AG04449 (cell line): ENCODE measurements at regions of chr13 and their contacts with region 1.

Region 1: DNA sequence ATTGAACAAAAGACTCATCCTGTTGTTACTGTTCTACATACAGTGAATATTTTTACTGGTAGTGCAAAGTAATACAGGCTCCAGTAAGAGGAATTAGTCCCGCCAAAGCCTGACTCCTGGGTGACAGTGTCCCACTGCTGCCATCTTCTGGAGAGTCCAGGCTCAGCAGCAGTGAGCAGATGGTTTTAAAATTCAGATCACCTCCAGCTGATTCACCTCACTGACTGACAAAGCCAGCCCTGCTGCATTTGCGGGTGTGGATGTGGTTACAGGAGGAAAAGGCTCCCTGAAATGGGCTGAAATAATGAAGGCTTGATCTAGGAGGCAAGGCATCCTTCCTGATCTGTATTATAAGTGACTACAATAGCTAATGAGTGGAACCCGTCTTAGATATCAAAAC is 18.3 kb downstream of the PABPC3 start:
- DNase-seq: peak; percentile 16
- H3K4me3 ChIP-seq: no peak overlapping the region
- CTCF ChIP-seq: peak; percentile 87

Region 2: DNA sequence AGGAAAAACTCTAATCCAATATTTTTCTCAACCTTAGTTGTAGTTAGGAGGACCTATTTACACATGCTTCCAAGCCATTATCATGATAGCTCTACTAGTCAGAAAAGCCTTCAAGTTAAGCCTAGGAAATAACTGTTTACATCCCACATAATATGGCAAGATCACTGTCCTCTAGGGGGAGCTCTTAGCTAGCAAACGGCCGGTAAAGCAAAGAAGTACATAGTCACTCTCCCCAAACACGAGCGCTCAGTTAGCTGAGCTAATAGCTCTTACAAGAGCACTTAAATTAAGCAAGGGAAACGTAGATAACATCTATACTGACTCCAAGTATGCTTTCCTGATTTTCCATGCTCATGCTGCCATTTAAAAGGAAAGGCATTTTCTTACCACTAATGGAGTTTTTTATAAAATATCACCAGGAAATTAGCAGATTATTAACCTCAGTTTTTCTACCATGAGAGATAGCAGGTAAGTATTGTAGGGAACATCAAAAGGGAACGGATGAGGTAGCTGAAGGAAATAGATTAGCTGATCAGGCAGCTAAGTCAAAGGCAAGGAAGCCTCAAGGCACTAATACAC is 118.9 kb before region 1 on chr13:
- CTCF ChIA-PET with region 1: interaction called, 19 read pairs
- POLR2A ChIA-PET with region 1: no interaction called
- DNase-seq: peak; percentile 45
- H3K4me3 ChIP-seq: no peak overlapping the region
- CTCF ChIP-seq: peak; percentile 78

Region 3: DNA sequence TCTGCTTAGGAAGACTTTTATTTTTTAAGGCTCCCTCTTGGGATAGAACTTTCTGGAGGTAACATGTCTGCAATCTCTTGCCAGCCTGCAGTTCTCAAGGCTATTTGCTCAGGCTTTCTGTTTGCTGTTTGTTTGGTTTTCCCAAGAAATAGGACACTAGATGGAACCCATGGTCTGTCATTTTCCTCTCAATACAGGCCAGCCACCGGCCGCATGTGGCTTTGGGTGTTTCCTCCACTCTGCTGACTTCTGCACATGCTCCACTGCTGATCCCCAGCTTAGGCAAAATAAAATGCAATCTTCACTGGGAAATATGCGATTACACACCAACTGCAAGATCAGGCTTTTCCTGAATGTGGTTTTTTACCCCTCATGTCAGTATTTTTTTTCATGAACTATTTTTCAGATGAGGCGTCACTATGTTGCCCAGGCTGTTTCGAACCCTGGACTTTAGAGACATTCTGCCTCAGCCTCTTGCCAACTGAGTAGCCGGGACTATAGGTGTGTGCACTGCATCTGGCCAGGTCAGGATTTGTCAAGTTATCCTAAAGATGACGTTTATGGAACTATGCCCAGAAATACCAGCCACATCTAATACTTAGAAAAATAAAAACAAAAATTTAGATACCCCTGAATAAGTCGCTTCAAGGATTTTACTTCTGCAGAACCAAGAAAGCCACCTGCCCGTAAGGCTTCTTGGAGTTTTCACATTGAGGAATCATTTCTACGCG is 112.6 kb before region 1 on chr13:
- CTCF ChIA-PET with region 1: interaction called, 23 read pairs
- POLR2A ChIA-PET with region 1: no interaction called
- DNase-seq: no peak
- H3K4me3 ChIP-seq: no peak overlapping the region
- CTCF ChIP-seq: no peak

Region 4: GRCh38 chr13:25069911-25070310 is 44.3 kb before region 1 on chr13:
- CTCF ChIA-PET with region 1: no interaction called
- POLR2A ChIA-PET with region 1: no interaction called
- DNase-seq: no peak
- H3K4me3 ChIP-seq: no peak overlapping the region
- CTCF ChIP-seq: no peak

Region 5: GRCh38 chr13:25085125-25085742 is 29.0 kb before region 1 on chr13:
- CTCF ChIA-PET with region 1: interaction called, 40 read pairs
- POLR2A ChIA-PET with region 1: no interaction called
- DNase-seq: no peak
- H3K4me3 ChIP-seq: no peak overlapping the region
- CTCF ChIP-seq: peak; percentile 53

Region 6: DNA sequence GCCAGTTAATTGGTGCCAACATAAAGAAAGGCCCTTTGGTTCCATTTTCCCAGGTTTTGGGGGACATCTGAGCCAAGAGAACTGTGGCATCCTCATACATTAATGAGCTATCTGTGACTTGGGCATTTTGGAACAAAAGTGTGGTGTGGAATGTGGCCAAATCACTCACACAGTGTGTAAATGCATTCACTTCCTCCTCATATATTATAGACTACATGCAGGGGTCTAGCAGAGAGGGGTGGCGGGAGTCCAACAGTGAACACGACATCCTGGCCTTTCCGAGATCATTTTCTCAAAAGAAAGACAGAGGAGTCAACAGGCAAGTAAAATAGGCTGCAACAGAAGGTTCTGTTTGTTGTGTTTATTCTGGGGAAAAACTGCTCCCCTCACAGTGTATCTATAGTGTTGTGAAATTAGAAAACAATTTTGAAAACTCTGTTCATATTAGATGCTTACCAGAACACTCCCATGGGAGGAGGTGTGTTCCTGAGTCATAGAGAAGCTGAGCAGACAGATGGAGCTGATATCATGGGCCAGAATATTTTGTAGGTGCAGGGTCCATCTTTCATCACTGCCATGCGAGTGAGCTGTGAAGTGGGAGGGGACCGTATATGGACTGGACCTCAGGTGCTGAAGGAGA is 18.7 kb after region 1 on chr13:
- CTCF ChIA-PET with region 1: interaction called, 11 read pairs
- POLR2A ChIA-PET with region 1: no interaction called
- DNase-seq: no peak
- H3K4me3 ChIP-seq: no peak overlapping the region
- CTCF ChIP-seq: no peak